T-cell (primary cell): ENCODE measurements at regions of chr22 and their contacts with region 1.

Region 1: DNA sequence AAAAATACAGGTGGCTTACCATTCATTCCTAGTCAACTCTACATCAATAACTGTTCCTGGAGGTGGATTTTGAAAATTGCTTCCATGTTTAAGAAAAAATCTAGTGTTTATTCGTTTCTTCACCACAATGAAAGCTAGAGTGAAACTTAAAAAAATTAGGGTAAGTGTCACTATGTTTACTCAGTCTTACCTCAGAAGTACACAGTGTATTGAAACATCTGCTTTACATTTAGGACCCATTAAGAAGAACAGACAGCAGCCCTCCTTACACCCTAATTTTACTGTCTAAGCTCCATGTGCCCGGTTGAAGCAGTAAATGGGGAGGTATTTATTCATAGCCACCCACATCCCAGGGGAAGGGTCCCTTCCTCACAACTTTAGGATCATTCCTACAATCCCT is 51.4 kb downstream of the PIWIL3 start:
- DNase-seq: no peak
- ATAC-seq: no peak
- H3K4me3 ChIP-seq: no peak overlapping the region
- H3K4me3 Mint-ChIP-seq: no peak overlapping the region
- H3K27ac ChIP-seq: no peak overlapping the region
- H3K27ac Mint-ChIP-seq: no peak overlapping the region
- H3K4me1 ChIP-seq: no peaks in the 10 kb centered on the region
- H3K4me1 Mint-ChIP-seq: no peaks in the 10 kb centered on the region
- H3K27me3 ChIP-seq: peaks cover 0 to 10% of the 10 kb centered on the region in 2 experiments
- H3K27me3 Mint-ChIP-seq: peaks cover 19 to 27% of the 10 kb centered on the region in 2 donors

Region 2: DNA sequence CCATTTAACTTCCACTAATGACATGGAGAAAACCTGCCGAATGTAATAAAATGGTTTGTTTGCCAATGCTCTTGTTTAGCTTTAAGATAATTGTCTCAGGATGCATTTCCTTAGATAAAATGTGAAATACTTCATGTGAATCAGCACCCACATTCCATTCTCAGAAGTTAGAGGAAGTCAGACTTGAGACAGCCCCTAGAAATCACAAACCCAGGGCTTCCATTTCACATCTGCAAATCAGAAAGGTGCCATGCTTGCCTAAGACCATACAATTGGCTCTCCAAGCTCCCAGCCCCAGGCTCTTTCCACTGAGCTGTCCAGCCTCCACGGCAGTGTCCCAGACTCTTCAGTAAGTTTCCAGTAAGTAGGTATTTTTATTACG is 331.3 kb before region 1 on chr22:
- CTCF ChIA-PET with region 1: no interaction called
- POLR2A ChIA-PET with region 1: no interaction called
- DNase-seq: no peak
- ATAC-seq: no peak
- H3K4me3 ChIP-seq: no peak overlapping the region
- H3K4me3 Mint-ChIP-seq: no peak overlapping the region
- H3K27ac ChIP-seq: no peak overlapping the region
- H3K27ac Mint-ChIP-seq: no peak overlapping the region
- H3K4me1 ChIP-seq: peaks cover 0 to 11% of the 10 kb centered on the region in 2 experiments
- H3K4me1 Mint-ChIP-seq: peaks cover 12 to 24% (median 17%) of the 10 kb centered on the region in 3 donors
- H3K27me3 ChIP-seq: no peaks in the 10 kb centered on the region
- H3K27me3 Mint-ChIP-seq: no peaks in the 10 kb centered on the region

Region 3: GRCh38 chr22:24758164-24758799 is 35.2 kb after region 1 on chr22:
- CTCF ChIA-PET with region 1: interaction called in 1 of 2 experiments, 14 read pairs
- POLR2A ChIA-PET with region 1: no interaction called
- DNase-seq: peak in 32 of 35 experiments; percentile 6 to 77 (median 42)
- ATAC-seq: no peak
- H3K4me3 ChIP-seq: no peak overlapping the region
- H3K4me3 Mint-ChIP-seq: no peak overlapping the region
- H3K27ac ChIP-seq: no peak overlapping the region
- H3K27ac Mint-ChIP-seq: no peak overlapping the region
- H3K4me1 ChIP-seq: no peaks in the 10 kb centered on the region
- H3K4me1 Mint-ChIP-seq: no peaks in the 10 kb centered on the region
- H3K27me3 ChIP-seq: peaks cover 0 to 4% of the 10 kb centered on the region in 2 experiments
- H3K27me3 Mint-ChIP-seq: peaks cover 0 to 3% of the 10 kb centered on the region in 2 donors

Region 4: DNA sequence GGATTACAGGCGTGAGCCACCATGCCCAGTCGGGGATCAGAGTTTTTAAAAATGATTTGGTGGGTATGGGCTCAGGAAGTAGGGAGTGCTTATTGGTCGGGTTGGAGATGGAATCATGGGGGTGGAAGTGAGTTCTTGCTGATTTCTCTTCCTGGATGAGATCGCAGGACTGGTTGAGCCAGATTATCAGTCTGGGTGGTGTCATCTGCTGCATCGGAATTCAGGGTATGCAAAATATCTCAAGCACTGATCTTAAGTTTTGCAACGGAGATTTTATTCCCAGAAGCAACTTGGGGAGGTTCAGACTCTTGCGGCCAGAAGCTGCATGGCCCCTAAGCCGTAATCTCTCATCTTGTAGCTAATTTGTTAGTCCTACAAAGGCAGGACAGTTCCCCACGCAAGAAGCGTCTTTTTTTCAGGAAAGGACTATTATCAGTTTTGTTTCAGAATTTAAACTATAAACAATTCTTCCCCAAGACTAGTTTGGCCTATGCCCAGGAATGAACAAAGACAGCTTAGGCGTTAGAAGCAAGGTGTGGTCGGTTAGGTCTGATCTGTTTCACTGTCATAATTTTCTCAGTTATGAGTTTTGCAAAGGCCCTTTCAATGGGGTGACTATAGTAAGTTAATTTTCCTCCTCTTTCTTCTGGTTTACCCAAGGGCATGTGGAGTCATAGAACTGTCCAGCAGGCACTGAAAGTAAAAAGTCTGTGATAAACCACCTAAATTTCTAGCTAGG is 52.8 kb after region 1 on chr22:
- CTCF ChIA-PET with region 1: no interaction called
- POLR2A ChIA-PET with region 1: no interaction called
- DNase-seq: no peak
- ATAC-seq: no peak
- H3K4me3 ChIP-seq: no peak overlapping the region
- H3K4me3 Mint-ChIP-seq: no peak overlapping the region
- H3K27ac ChIP-seq: no peak overlapping the region
- H3K27ac Mint-ChIP-seq: no peak overlapping the region
- H3K4me1 ChIP-seq: no peaks in the 10 kb centered on the region
- H3K4me1 Mint-ChIP-seq: peaks cover 0 to 6% (median 2%) of the 10 kb centered on the region in 3 donors
- H3K27me3 ChIP-seq: peaks cover 0 to 16% of the 10 kb centered on the region in 2 experiments
- H3K27me3 Mint-ChIP-seq: peaks cover 9 to 23% of the 10 kb centered on the region in 2 donors

Region 5: DNA sequence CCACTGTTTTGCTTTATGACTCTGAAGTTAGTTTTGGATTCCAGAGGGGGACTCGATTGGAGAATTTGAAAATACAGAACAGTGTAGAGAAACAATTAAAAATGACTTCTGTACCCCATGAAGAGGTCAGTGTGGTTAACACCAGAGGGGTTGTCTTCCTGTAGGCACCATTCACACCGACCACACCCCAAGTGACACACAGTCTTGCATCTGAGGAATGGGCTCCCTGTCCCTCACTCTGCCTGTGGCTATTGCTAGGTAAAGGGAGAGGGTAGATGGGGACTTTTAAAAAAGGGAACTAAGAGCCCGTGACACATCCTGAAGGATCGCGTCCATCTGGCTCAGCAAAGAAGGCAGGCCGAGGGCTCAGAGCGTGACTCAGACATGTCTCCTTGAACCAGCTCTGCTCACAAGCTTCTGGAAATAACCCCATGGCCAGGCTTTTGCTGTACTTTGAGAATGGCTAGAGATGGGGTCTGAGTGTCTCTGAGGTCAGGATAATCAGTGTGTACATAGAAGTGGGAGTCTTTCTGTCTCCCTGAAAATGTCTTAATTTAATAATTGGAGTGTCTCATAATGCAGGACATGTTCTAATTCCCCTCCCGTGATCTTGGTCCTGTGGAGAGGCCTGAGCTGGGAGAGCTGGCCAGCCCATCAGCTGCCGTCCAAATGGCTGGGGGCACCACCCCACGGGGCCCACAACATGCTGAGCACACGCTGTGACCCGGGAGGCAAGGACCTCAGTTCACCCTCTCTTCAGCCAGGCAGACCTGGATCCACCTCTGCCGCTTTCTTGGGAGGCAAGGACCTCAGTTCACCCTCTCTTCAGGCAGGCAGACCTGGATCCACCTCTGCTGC is 122.2 kb after region 1 on chr22:
- CTCF ChIA-PET with region 1: no interaction called
- POLR2A ChIA-PET with region 1: no interaction called
- DNase-seq: peak in 5 of 35 experiments; percentile 1 to 12 (median 5)
- ATAC-seq: peak in 1 of 4 experiments; percentile 50
- H3K4me3 ChIP-seq: no peak overlapping the region
- H3K4me3 Mint-ChIP-seq: no peak overlapping the region
- H3K27ac ChIP-seq: no peak overlapping the region
- H3K27ac Mint-ChIP-seq: peak overlapping the region in 1 of 2 donors; percentile 47
- H3K4me1 ChIP-seq: peaks cover 0 to 24% of the 10 kb centered on the region in 2 experiments
- H3K4me1 Mint-ChIP-seq: peaks cover 0 to 19% (median 6%) of the 10 kb centered on the region in 3 donors
- H3K27me3 ChIP-seq: peaks cover 0 to 4% of the 10 kb centered on the region in 2 experiments
- H3K27me3 Mint-ChIP-seq: no peaks in the 10 kb centered on the region